ENCODE measurements at regions of chr2 and their contacts with region 1.

Region 1: DNA sequence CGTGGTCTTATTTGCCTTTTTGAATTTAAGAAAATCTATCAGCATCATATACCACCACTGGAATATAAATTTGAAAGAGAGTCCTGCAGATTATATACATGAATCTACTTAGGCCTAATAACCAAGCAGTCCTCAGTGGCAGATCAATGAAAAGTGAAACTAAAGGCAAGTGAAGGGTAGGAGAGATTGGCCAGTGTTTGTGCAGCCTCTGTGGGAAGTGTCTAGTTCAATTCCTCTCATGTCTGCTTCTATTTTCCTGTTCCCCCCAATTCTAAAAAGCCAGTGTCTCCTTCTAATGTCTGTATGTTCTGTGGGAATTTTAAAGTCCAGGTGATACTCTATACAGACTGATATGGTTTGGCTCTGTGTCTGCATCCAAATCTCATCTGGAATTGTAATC is 61.9 kb downstream of the FN1 start:
- DNase-seq: no peak
- ATAC-seq: no peak
- H3K4me3 ChIP-seq: no peak overlapping the region
- H3K27ac ChIP-seq: no peak overlapping the region
- H3K4me1 ChIP-seq: no peaks in the 10 kb centered on the region
- H3K27me3 ChIP-seq: no peaks in the 10 kb centered on the region
- CTCF ChIP-seq: no peak

Region 2: GRCh38 chr2:215356948-215357461 is 17.0 kb before region 1 on chr2:
- CTCF ChIA-PET with region 1: no interaction called
- POLR2A ChIA-PET with region 1: no interaction called
- in situ Hi-C with region 1: no loop called
- intact Hi-C with region 1: no loop called
- DNase-seq: no peak
- ATAC-seq: no peak
- H3K4me3 ChIP-seq: no peak overlapping the region
- H3K27ac ChIP-seq: no peak overlapping the region
- H3K4me1 ChIP-seq: no peaks in the 10 kb centered on the region
- H3K27me3 ChIP-seq: no peaks in the 10 kb centered on the region
- CTCF ChIP-seq: no peak

Region 3: DNA sequence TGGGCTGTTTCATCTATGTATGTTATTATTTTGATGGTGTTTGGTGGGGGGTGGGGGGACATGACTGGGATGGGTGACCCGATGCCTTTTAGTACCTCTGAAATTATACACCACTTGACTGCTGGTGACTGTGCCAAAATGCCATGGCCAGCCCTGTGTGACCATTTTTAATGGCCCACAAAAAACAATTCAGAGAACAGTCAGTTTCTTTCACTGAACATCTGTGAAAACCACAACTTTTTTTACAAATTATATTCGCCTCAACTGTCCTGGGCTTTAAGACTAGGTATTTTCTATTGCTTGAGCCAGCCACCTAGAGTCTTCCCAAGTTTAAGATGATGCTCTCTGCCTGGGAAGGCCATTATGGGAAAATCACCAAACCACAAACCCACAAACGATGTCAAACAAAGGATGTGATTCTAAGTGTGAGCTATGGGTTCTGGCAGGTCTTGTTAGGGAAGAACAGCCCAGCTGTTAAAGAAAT is 27.9 kb after region 1 on chr2:
- CTCF ChIA-PET with region 1: no interaction called
- POLR2A ChIA-PET with region 1: no interaction called
- in situ Hi-C with region 1: no loop called
- intact Hi-C with region 1: no loop called
- DNase-seq: no peak
- ATAC-seq: no peak
- H3K4me3 ChIP-seq: no peak overlapping the region
- H3K27ac ChIP-seq: no peak overlapping the region
- H3K4me1 ChIP-seq: no peaks in the 10 kb centered on the region
- H3K27me3 ChIP-seq: no peaks in the 10 kb centered on the region; the same call in 1 of the 2 replicates
- CTCF ChIP-seq: no peak

Region 4: GRCh38 chr2:215966274-215966673 is 592.3 kb after region 1 on chr2:
- CTCF ChIA-PET with region 1: interaction called, 10 read pairs
- POLR2A ChIA-PET with region 1: no interaction called
- in situ Hi-C with region 1: no loop called
- intact Hi-C with region 1: no loop called
- DNase-seq: no peak
- ATAC-seq: no peak
- H3K4me3 ChIP-seq: no peak overlapping the region
- H3K27ac ChIP-seq: no peak overlapping the region
- H3K4me1 ChIP-seq: no peaks in the 10 kb centered on the region
- H3K27me3 ChIP-seq: no peaks in the 10 kb centered on the region
- CTCF ChIP-seq: no peak